ENCODE measurements at regions of chr1 and their contacts with region 1.

Region 1: GRCh38 chr1:156421062-156421938 is 52.3 kb downstream of the RHBG start:
- DNase-seq: peak; percentile 86
- H3K4me3 Mint-ChIP-seq: peak overlapping the region; percentile 70
- H3K27ac Mint-ChIP-seq: no peak overlapping the region
- H3K4me1 Mint-ChIP-seq: peaks cover 19% of the 10 kb centered on the region
- H3K27me3 Mint-ChIP-seq: peaks cover 80% of the 10 kb centered on the region

Region 2: GRCh38 chr1:156435545-156436141 is 14.3 kb after region 1 on chr1:
- CTCF ChIA-PET with region 1: interaction called, 5 read pairs
- intact Hi-C with region 1: loop called (anchors 1 kb)
- DNase-seq: peak; percentile 46
- H3K4me3 Mint-ChIP-seq: peak overlapping the region; percentile 73
- H3K27ac Mint-ChIP-seq: no peak overlapping the region
- H3K4me1 Mint-ChIP-seq: peaks cover 42% of the 10 kb centered on the region
- H3K27me3 Mint-ChIP-seq: peaks cover 78% of the 10 kb centered on the region

Region 3: GRCh38 chr1:156551866-156552265 is 130.6 kb after region 1 on chr1:
- CTCF ChIA-PET with region 1: no interaction called
- intact Hi-C with region 1: no loop called
- DNase-seq: no peak
- H3K4me3 Mint-ChIP-seq: no peak overlapping the region
- H3K27ac Mint-ChIP-seq: no peak overlapping the region
- H3K4me1 Mint-ChIP-seq: no peaks in the 10 kb centered on the region
- H3K27me3 Mint-ChIP-seq: no peaks in the 10 kb centered on the region

Region 4: GRCh38 chr1:158149577-158150269 is 1728.4 kb after region 1 on chr1:
- CTCF ChIA-PET with region 1: no interaction called
- intact Hi-C with region 1: no loop called
- DNase-seq: peak; percentile 84
- H3K4me3 Mint-ChIP-seq: peak overlapping the region; percentile 77
- H3K27ac Mint-ChIP-seq: peak overlapping the region; percentile 77
- H3K4me1 Mint-ChIP-seq: peaks cover 19% of the 10 kb centered on the region
- H3K27me3 Mint-ChIP-seq: no peaks in the 10 kb centered on the region

Measured in activated naive CD4-positive, alpha-beta T cell treated with anti-CD3 and anti-CD28 coated beads for 36 hours (primary cell).